ENCODE measurements at regions of chr6 and their contacts with region 1.

Region 1: DNA sequence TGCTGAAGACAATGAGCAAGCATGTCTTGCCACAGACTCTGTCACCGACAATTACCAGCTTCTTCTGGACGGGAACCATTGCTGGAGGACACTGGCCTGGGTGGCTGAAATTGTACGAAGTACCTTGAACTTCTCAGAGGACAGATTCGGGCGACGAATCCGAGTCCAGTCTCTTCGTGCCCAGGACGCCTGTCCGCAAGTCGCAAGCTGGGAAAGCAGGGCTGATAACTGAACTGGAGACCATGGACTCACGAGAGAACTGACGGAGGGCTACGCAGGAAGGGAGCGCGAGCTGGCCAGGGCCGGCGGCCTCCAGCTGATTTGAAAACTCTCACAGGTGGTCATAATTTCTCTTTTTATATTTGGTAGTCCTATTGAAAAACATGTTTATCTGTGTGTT is 1229.5 kb upstream of the MAP3K7 start:
- DNase-seq: no peak
- H3K4me3 ChIP-seq: no peak overlapping the region
- H3K27ac ChIP-seq: no peak overlapping the region
- H3K4me1 ChIP-seq: no peaks in the 10 kb centered on the region
- H3K27me3 ChIP-seq: no peaks in the 10 kb centered on the region
- CTCF ChIP-seq: no peak
- EP300 ChIP-seq: no peak
- POLR2A ChIP-seq: no peak

Region 2: DNA sequence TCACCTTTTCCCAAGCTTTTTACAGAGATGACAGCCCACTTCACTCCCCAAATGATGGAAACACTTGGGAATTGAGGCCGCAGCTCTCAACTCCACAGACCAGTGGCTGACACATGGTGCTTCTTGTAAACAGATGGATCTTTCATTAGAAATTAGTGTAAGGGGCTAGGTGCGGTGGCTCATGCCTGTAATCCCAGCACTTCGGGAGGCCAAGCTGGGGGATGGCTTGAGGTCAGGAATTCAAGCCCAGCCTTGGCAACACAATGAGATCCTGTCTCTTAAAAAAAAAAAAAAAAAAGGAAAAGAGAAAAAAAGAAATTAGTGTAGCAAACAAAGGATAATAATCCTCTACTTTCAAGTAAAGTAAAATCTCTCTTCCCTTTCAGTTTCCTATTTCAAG is 1906.3 kb before region 1 on chr6:
- intact Hi-C with region 1: loop called in 1 of 4 experiments (anchors 5 kb)
- DNase-seq: no peak
- H3K4me3 ChIP-seq: no peak overlapping the region
- H3K27ac ChIP-seq: no peak overlapping the region
- H3K4me1 ChIP-seq: no peaks in the 10 kb centered on the region
- H3K27me3 ChIP-seq: no peaks in the 10 kb centered on the region
- CTCF ChIP-seq: no peak
- EP300 ChIP-seq: no peak
- POLR2A ChIP-seq: no peak

Measured in ovary (tissue), 10 donors.